Vagina (tissue), 2 donors: ENCODE measurements at regions of chr1 and their contacts with region 1.

Region 1: DNA sequence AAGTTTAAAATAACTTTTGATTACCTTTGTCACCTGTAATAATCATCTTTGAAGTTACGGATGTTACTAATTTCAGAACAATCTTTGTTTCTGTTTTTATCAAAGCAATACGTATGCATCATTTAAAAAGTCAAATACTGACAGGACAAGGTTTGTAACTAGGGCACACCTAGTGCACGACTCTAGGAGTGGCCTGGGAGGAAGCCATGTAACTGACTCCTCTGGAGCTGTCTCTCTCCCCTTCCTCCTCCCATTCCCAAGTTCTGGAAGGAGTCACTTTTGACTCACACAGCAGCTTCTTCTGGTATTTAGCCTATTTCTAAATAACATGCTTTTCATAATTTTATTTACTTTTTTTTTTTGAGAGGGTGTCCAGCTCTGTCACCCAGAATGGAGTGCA is 11.8 kb upstream of the RAP1GAP start:
- DNase-seq: no peak
- H3K4me3 ChIP-seq: no peak overlapping the region
- H3K27ac ChIP-seq: no peak overlapping the region
- H3K4me1 ChIP-seq: peaks cover 10% of the 10 kb centered on the region
- H3K27me3 ChIP-seq: no peaks in the 10 kb centered on the region
- CTCF ChIP-seq: no peak
- POLR2A ChIP-seq: no peak

Region 2: DNA sequence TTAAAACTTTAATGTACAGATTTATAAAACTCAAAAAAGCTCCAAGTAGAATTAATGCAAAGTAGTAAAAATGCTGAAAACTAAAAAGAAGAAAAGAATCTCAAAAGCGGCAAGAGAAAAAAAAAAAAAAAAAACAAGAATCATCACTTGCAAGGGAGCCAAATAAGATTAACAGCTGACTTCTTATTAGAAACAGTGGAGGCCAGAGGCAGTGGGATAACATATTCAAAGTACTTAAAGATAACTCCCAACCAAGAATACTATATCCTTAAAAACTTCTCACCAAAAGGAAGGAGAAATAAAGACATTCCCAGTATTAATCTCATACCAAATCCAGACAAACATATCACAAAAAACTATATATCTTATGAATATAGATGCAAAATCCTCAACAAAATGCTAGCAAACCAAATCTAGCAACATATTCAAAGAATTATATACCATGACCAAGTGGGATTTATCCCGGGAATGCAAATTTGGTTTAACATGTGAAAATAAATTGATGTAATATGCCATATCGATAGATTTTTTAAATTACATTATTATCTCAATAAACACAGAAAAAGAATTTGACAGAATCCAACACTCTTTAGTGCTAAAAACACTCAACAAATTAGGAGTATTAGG is 1257.6 kb before region 1 on chr1:
- intact Hi-C with region 1: loop called (anchors 5 kb)
- DNase-seq: no peak
- H3K4me3 ChIP-seq: no peak overlapping the region
- H3K27ac ChIP-seq: no peak overlapping the region
- H3K4me1 ChIP-seq: no peaks in the 10 kb centered on the region
- H3K27me3 ChIP-seq: no peaks in the 10 kb centered on the region
- CTCF ChIP-seq: no peak
- POLR2A ChIP-seq: no peak